T-cell (primary cell): ENCODE measurements at regions of chr6 and their contacts with region 1.

Region 1: GRCh38 chr6:109382576-109383437 is 540 bp upstream of the CD164 start:
- DNase-seq: peak; percentile 88 to 96 (median 93)
- ATAC-seq: peak; percentile 75 to 83 (median 80)
- H3K4me3 ChIP-seq: peak overlapping the region; percentile 94 to 98
- H3K4me3 Mint-ChIP-seq: peak overlapping the region; percentile 87 to 98 (median 94)
- H3K27ac ChIP-seq: peak overlapping the region; percentile 95
- H3K27ac Mint-ChIP-seq: peak overlapping the region; percentile 99
- H3K4me1 ChIP-seq: peaks cover 16 to 30% of the 10 kb centered on the region in 2 experiments
- H3K4me1 Mint-ChIP-seq: peaks cover 45 to 53% (median 48%) of the 10 kb centered on the region in 3 donors
- H3K27me3 ChIP-seq: no peaks in the 10 kb centered on the region
- H3K27me3 Mint-ChIP-seq: no peaks in the 10 kb centered on the region

Region 2: GRCh38 chr6:109187399-109188114 is 195.2 kb before region 1 on chr6:
- CTCF ChIA-PET with region 1: interaction called, 8 to 82 read pairs
- POLR2A ChIA-PET with region 1: no interaction called
- DNase-seq: peak; percentile 20 to 79 (median 53)
- ATAC-seq: peak; percentile 81 to 87 (median 84)
- H3K4me3 ChIP-seq: no peak overlapping the region
- H3K4me3 Mint-ChIP-seq: no peak overlapping the region
- H3K27ac ChIP-seq: no peak overlapping the region
- H3K27ac Mint-ChIP-seq: no peak overlapping the region
- H3K4me1 ChIP-seq: no peaks in the 10 kb centered on the region
- H3K4me1 Mint-ChIP-seq: no peaks in the 10 kb centered on the region
- H3K27me3 ChIP-seq: no peaks in the 10 kb centered on the region
- H3K27me3 Mint-ChIP-seq: peaks cover 10 to 25% of the 10 kb centered on the region in 2 donors

Region 3: DNA sequence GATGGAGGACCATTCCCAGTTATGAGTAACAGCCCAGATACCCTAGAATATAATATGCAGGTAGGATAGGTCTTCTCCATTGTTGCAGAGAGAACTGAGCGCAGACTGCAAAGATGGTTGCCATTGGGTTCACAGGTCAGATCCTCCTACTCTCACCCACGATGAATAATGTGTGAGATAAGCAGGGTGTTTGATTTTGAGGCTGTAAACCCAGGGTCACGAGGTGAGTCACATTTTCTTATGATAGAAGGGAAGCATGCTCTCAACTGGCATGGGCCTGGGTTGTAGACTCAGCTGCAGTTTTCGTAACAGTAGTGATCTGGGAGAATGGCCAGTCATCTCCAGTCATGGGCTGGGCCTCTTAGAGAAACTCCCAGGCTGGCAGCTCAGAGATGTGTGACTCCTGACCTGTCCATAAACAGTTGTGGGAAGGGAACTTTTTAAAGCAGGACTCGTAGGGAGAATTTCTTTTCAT is 74.8 kb before region 1 on chr6:
- CTCF ChIA-PET with region 1: no interaction called
- POLR2A ChIA-PET with region 1: no interaction called
- DNase-seq: peak in 1 of 35 experiments; percentile 10
- ATAC-seq: peak in 1 of 4 experiments; percentile 23
- H3K4me3 ChIP-seq: no peak overlapping the region
- H3K4me3 Mint-ChIP-seq: no peak overlapping the region
- H3K27ac ChIP-seq: no peak overlapping the region
- H3K27ac Mint-ChIP-seq: no peak overlapping the region
- H3K4me1 ChIP-seq: no peaks in the 10 kb centered on the region
- H3K4me1 Mint-ChIP-seq: peaks cover 0 to 9% (median 0%) of the 10 kb centered on the region in 3 donors
- H3K27me3 ChIP-seq: no peaks in the 10 kb centered on the region
- H3K27me3 Mint-ChIP-seq: peaks cover 0 to 2% of the 10 kb centered on the region in 2 donors

Region 4: GRCh38 chr6:109406196-109406595 is 23.4 kb after region 1 on chr6:
- CTCF ChIA-PET with region 1: interaction called in 1 of 2 experiments, 10 read pairs
- POLR2A ChIA-PET with region 1: no interaction called
- DNase-seq: no peak
- ATAC-seq: no peak
- H3K4me3 ChIP-seq: no peak overlapping the region
- H3K4me3 Mint-ChIP-seq: no peak overlapping the region
- H3K27ac ChIP-seq: no peak overlapping the region
- H3K27ac Mint-ChIP-seq: no peak overlapping the region
- H3K4me1 ChIP-seq: no peaks in the 10 kb centered on the region
- H3K4me1 Mint-ChIP-seq: no peaks in the 10 kb centered on the region
- H3K27me3 ChIP-seq: no peaks in the 10 kb centered on the region
- H3K27me3 Mint-ChIP-seq: peaks cover 0 to 4% of the 10 kb centered on the region in 2 donors

Region 5: DNA sequence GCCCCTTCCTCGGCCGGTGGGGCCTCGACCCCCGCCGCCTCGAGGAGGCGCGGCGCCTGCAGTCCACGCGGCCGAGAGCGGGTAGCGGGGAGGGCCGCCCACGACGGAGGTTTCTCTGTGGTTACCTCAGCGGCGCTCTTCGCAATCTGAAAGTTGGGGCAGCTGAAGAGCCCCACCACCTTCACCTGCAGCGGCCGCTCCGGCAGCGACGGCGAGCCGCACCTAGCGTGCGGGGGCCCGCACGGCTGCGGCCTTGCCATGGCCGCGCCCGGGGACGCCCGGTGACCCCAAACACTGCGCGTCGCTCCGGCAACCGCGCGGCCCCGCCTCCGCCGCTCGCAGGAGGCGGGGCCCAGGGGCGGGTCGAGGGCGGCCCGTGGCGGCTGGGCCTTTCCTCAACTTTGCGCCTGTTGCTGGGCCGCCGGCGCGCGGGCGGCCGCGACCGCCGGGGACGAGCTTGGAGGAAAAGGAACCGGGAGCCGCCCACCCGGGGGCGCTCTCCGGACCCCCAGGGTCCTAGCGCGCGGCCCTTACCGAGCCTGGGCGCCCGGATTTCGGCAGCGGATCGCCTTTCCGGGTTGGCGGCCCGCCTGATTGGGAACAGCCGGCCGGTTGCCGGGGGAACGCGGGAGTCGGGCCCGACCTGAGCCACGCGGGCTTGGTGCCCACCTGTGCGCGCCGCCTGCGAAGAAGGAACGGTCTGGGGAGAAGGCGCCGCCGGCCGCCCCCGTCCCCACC is 57.7 kb after region 1 on chr6 and contains the starts of genes PPIL6 and SMPD2:
- CTCF ChIA-PET with region 1: interaction called, 4 to 20 read pairs
- POLR2A ChIA-PET with region 1: interaction called, 4 to 6 read pairs
- DNase-seq: peak; percentile 43 to 88 (median 62)
- ATAC-seq: peak; percentile 85 to 90 (median 86)
- H3K4me3 ChIP-seq: peak within 1 kb of the TSS; percentile 59 to 77
- H3K4me3 Mint-ChIP-seq: peak within 1 kb of the TSS; percentile 89 to 94 (median 92)
- H3K27ac ChIP-seq: peak within 1 kb of the TSS; percentile 68
- H3K27ac Mint-ChIP-seq: peak within 1 kb of the TSS; percentile 90 to 92
- H3K4me1 ChIP-seq: peaks cover 4 to 31% of the 10 kb centered on the region in 2 experiments
- H3K4me1 Mint-ChIP-seq: peaks cover 26 to 33% (median 27%) of the 10 kb centered on the region in 3 donors
- H3K27me3 ChIP-seq: no peaks in the 10 kb centered on the region
- H3K27me3 Mint-ChIP-seq: no peaks in the 10 kb centered on the region
- total RNA-seq, gene PPIL6: 0.07 to 1.5 (median 0.38) TPM
- total RNA-seq, gene SMPD2: 21.1 to 36.7 (median 23.7) TPM